ENCODE measurements at regions of chr14 and their contacts with region 1.

Region 1: GRCh38 chr14:51846631-51847488 is 13.6 kb upstream of the GNG2 start:
- DNase-seq: peak; percentile 96
- ATAC-seq: peak; percentile 79
- H3K4me3 ChIP-seq: peak overlapping the region; percentile 57 to 89 (median 72)
- H3K4me3 Mint-ChIP-seq: peak overlapping the region; percentile 86
- H3K27ac ChIP-seq: peak overlapping the region; percentile 98
- H3K27ac Mint-ChIP-seq: peak overlapping the region; percentile 97
- H3K4me1 ChIP-seq: peaks cover 50 to 63% of the 10 kb centered on the region in 2 donors
- H3K4me1 Mint-ChIP-seq: peaks cover 75% of the 10 kb centered on the region
- H3K27me3 ChIP-seq: no peaks in the 10 kb centered on the region
- H3K27me3 Mint-ChIP-seq: no peaks in the 10 kb centered on the region
- CTCF ChIP-seq: no peak

Region 2: DNA sequence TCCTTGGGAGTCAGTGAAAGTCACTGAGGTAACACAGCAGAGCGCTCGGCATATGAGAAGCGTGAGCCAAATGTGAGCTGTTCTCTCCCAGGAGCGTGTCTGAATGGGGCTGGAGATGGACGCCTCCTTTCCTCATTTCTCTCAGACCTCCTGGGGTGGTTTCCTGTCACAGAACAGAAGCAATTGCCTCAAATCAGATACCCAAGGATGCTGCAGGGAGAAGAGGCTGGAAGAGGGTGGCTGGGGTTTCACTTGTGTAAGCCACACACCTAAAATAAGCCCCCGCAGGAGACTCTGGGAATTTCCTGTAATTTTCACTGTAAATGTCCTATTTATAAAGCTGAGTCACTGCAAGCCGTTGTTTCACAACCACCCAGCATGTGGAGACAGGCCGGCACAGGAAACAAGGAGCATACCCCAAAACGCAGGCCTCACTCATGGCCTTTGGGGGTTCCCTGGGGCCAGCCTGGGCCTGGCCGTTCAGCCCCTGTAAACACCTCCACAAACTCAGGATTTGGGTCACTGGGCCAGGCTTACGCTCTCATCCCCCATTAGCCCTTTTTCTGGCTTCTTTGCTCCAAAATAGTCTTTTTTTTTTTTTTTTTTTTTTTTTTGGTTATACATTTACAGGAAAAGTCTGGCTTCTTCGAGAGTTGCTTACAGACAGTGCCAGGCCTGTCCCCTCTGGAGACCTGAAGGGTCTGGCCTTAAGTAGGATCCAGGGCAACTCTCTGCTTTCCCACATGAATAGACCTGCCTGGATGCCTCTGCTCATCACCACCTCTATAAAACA is 1785.8 kb before region 1 on chr14:
- CTCF ChIA-PET with region 1: no interaction called
- POLR2A ChIA-PET with region 1: no interaction called
- intact Hi-C with region 1: loop called (anchors 10 kb)
- DNase-seq: peak; percentile 34
- ATAC-seq: no peak
- H3K4me3 ChIP-seq: peak overlapping the region in 3 of 5 experiments; percentile 0 to 9 (median 2)
- H3K4me3 Mint-ChIP-seq: peak overlapping the region; percentile 95
- H3K27ac ChIP-seq: peak overlapping the region; percentile 92 to 96
- H3K27ac Mint-ChIP-seq: peak overlapping the region; percentile 100
- H3K4me1 ChIP-seq: peaks cover 60 to 82% of the 10 kb centered on the region in 2 donors
- H3K4me1 Mint-ChIP-seq: peaks cover 87% of the 10 kb centered on the region
- H3K27me3 ChIP-seq: no peaks in the 10 kb centered on the region
- H3K27me3 Mint-ChIP-seq: no peaks in the 10 kb centered on the region
- CTCF ChIP-seq: no peak

Region 3: DNA sequence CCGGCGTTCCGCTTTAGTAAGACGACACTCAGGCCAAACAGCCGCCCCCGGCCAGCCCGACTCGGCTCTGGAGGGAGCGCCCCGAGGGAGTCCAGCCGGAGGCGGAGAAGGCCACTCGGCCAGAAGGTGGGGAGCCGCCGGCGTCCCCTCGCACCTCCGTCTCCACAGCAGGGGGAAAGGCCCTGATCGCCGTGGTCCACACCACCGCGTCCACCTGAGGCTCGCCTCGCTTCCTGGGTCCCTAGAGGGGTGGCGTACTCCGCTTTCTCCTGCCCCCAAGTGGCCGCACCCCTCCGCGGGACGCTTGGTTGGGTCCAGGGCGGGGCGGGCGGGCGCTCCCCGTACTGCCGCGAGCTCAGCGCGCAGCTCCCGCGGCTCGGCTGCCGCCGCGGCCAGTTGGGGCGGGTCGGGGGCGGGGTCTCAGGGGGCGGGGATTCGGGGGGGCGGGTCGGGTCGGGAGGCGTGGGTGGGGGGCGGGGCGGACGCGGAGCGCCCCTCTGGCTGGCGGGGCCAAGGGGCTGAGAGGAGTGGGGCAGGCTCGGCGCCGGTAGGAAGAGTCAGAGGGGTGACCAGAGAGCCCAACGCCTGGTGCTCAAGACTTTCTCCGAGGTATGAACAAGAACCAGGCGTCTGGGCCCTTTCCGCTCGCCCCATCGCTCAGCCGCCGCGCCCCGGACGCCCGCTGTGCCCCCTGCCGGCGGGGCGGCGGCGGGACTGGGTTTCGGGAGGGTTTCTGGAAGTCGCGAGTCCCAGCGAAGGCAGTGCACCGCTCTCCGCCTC is 195.3 kb before region 1 on chr14 and contains the start of gene FRMD6:
- CTCF ChIA-PET with region 1: no interaction called
- POLR2A ChIA-PET with region 1: no interaction called
- intact Hi-C with region 1: loop called (anchors 5 kb)
- DNase-seq: peak; percentile 90
- ATAC-seq: peak; percentile 80
- H3K4me3 ChIP-seq: peak within 1 kb of the TSS; percentile 34 to 85 (median 69)
- H3K4me3 Mint-ChIP-seq: peak within 1 kb of the TSS; percentile 85
- H3K27ac ChIP-seq: no peak within 1 kb of the TSS
- H3K27ac Mint-ChIP-seq: peak within 1 kb of the TSS; percentile 56
- H3K4me1 ChIP-seq: peaks cover 19 to 25% of the 10 kb centered on the region in 2 donors
- H3K4me1 Mint-ChIP-seq: peaks cover 12% of the 10 kb centered on the region
- H3K27me3 ChIP-seq: peaks cover 0 to 37% (median 34%) of the 10 kb centered on the region in 4 experiments
- H3K27me3 Mint-ChIP-seq: peaks cover 41% of the 10 kb centered on the region
- CTCF ChIP-seq: peak; percentile 75
- total RNA-seq, gene FRMD6: 0.17 and 0.30 TPM in 2 replicates

Region 4: DNA sequence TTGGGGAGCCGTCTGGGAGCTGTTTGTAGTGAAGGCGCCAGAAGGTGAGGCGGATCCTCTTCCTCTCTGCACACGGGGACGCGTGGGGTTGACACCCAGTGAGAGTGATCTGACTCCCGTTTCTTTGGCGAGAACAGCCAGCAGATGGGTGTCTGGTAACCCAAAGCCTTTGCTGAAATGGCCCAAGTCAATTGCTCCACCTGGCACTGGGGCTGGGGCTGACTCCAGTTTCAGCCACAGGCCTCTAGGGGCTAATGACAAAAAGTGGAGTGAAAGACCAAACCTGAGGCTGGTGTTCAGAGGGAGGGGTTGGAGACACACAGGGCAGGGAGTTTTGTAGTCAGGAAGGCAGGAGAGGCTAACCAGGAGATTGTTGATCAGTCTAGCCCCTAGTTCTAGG is 108.1 kb before region 1 on chr14:
- CTCF ChIA-PET with region 1: no interaction called
- POLR2A ChIA-PET with region 1: no interaction called
- intact Hi-C with region 1: no loop called
- DNase-seq: no peak
- ATAC-seq: no peak
- H3K4me3 ChIP-seq: no peak overlapping the region
- H3K4me3 Mint-ChIP-seq: no peak overlapping the region
- H3K27ac ChIP-seq: no peak overlapping the region
- H3K27ac Mint-ChIP-seq: no peak overlapping the region
- H3K4me1 ChIP-seq: no peaks in the 10 kb centered on the region
- H3K4me1 Mint-ChIP-seq: no peaks in the 10 kb centered on the region
- H3K27me3 ChIP-seq: peaks cover 0 to 6% (median 2%) of the 10 kb centered on the region in 4 experiments
- H3K27me3 Mint-ChIP-seq: peaks cover 8% of the 10 kb centered on the region
- CTCF ChIP-seq: no peak

Region 5: DNA sequence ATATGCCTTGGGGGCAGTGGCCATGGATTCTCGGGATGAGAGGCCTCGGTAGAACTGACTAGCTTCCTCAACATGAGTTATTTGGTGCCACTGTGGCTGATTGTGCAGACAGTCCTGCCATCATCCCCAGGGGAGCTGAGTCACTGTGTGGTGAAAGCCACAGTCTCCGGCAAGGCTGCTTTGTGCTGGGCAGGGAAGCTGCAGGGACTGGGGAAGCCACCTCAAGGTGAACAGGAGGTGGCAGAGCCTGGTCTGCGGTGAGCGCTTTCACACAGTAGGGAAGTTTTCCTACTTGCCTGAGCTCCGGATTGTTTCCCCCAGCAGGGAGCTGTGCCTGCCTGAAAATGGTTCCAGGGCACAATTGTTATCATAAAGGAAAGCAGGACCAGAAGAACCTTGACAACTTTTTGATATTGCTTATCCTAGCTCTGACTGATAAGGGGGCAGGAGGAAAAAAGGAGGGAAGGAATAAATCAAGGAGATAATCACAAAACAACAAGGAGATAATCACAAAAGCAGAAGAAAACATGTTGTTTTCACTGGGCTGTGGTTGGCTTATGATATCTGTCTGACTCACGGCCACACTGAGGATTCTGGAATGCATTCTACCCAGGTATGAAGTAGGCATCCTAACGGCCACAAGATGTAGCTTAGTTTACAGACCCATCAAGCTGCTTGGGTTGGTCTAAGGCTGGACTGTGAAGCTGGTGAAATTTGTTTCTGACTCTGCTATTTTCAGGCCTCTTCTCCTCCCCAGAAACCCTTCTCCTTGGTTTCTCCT is 18.7 kb before region 1 on chr14:
- CTCF ChIA-PET with region 1: interaction called, 24 read pairs
- POLR2A ChIA-PET with region 1: no interaction called
- intact Hi-C with region 1: loop called (anchors 1 kb)
- DNase-seq: peak; percentile 75
- ATAC-seq: peak; percentile 100
- H3K4me3 ChIP-seq: no peak overlapping the region
- H3K4me3 Mint-ChIP-seq: peak overlapping the region; percentile 20
- H3K27ac ChIP-seq: no peak overlapping the region
- H3K27ac Mint-ChIP-seq: peak overlapping the region; percentile 4
- H3K4me1 ChIP-seq: peaks cover 11 to 13% of the 10 kb centered on the region in 2 donors
- H3K4me1 Mint-ChIP-seq: no peaks in the 10 kb centered on the region
- H3K27me3 ChIP-seq: peaks cover 0 to 7% (median 2%) of the 10 kb centered on the region in 4 experiments
- H3K27me3 Mint-ChIP-seq: no peaks in the 10 kb centered on the region
- CTCF ChIP-seq: no peak

Region 6: GRCh38 chr14:51884086-51884927 is 37.4 kb after region 1 on chr14:
- CTCF ChIA-PET with region 1: interaction called, 3 read pairs
- POLR2A ChIA-PET with region 1: no interaction called
- intact Hi-C with region 1: loop called (anchors 5 kb)
- DNase-seq: peak; percentile 40
- ATAC-seq: peak; percentile 14
- H3K4me3 ChIP-seq: no peak overlapping the region
- H3K4me3 Mint-ChIP-seq: peak overlapping the region; percentile 17
- H3K27ac ChIP-seq: peak overlapping the region; percentile 8 to 19
- H3K27ac Mint-ChIP-seq: peak overlapping the region; percentile 67
- H3K4me1 ChIP-seq: peaks cover 31 to 39% of the 10 kb centered on the region in 2 donors
- H3K4me1 Mint-ChIP-seq: peaks cover 55% of the 10 kb centered on the region
- H3K27me3 ChIP-seq: no peaks in the 10 kb centered on the region
- H3K27me3 Mint-ChIP-seq: no peaks in the 10 kb centered on the region
- CTCF ChIP-seq: no peak

Region 7: DNA sequence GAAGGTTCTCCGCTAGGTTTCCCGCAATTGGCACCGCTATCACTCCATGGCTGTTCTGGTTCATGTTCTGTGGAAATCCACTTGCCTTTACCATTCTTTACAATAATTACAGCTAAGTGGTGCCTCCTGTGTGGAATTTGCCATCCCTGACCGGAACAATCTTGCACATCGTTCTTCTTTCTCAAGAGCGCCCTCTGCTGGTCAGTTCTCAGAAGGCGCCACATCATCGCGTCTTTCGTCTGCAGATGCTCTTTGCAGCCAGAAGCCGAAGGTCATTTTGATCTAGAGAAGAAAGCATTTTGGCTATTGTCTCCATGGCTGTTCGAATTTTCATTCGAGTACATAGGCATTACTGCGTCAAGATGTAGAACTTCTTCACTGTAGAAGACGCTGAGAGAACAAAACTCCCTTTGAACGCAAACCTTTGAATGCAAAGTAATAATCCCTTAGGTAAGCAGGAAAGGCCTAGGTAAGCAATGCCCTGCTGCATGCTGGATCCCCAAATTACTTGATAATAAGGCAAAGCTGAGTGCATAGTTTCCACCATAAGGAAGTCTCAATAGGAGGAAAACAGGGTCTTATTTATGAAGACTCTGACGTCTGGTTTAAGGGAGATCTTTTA is 132.3 kb after region 1 on chr14:
- CTCF ChIA-PET with region 1: interaction called, 19 read pairs
- POLR2A ChIA-PET with region 1: no interaction called
- intact Hi-C with region 1: loop called (anchors 2 kb)
- DNase-seq: peak; percentile 83
- ATAC-seq: peak; percentile 66
- H3K4me3 ChIP-seq: no peak overlapping the region
- H3K4me3 Mint-ChIP-seq: no peak overlapping the region
- H3K27ac ChIP-seq: no peak overlapping the region
- H3K27ac Mint-ChIP-seq: no peak overlapping the region
- H3K4me1 ChIP-seq: peaks cover 5 to 6% of the 10 kb centered on the region in 2 donors
- H3K4me1 Mint-ChIP-seq: peaks cover 5% of the 10 kb centered on the region
- H3K27me3 ChIP-seq: no peaks in the 10 kb centered on the region
- H3K27me3 Mint-ChIP-seq: no peaks in the 10 kb centered on the region
- CTCF ChIP-seq: peak; percentile 96

Region 8: GRCh38 chr14:52313903-52314594 is 467.2 kb after region 1 on chr14 and contains the start of gene PTGER2:
- CTCF ChIA-PET with region 1: no interaction called
- POLR2A ChIA-PET with region 1: no interaction called
- intact Hi-C with region 1: no loop called
- DNase-seq: peak; percentile 58
- ATAC-seq: peak; percentile 56
- H3K4me3 ChIP-seq: peak within 1 kb of the TSS; percentile 37 to 54 (median 50)
- H3K4me3 Mint-ChIP-seq: peak within 1 kb of the TSS; percentile 95
- H3K27ac ChIP-seq: no peak within 1 kb of the TSS
- H3K27ac Mint-ChIP-seq: peak within 1 kb of the TSS; percentile 3
- H3K4me1 ChIP-seq: peaks cover 49 to 57% of the 10 kb centered on the region in 2 donors
- H3K4me1 Mint-ChIP-seq: peaks cover 49% of the 10 kb centered on the region
- H3K27me3 ChIP-seq: peaks cover 0 to 77% (median 52%) of the 10 kb centered on the region in 4 experiments
- H3K27me3 Mint-ChIP-seq: peaks cover 57% of the 10 kb centered on the region
- CTCF ChIP-seq: no peak
- total RNA-seq, gene PTGER2: 0.32 and 0.44 TPM in 2 replicates

Region 9: DNA sequence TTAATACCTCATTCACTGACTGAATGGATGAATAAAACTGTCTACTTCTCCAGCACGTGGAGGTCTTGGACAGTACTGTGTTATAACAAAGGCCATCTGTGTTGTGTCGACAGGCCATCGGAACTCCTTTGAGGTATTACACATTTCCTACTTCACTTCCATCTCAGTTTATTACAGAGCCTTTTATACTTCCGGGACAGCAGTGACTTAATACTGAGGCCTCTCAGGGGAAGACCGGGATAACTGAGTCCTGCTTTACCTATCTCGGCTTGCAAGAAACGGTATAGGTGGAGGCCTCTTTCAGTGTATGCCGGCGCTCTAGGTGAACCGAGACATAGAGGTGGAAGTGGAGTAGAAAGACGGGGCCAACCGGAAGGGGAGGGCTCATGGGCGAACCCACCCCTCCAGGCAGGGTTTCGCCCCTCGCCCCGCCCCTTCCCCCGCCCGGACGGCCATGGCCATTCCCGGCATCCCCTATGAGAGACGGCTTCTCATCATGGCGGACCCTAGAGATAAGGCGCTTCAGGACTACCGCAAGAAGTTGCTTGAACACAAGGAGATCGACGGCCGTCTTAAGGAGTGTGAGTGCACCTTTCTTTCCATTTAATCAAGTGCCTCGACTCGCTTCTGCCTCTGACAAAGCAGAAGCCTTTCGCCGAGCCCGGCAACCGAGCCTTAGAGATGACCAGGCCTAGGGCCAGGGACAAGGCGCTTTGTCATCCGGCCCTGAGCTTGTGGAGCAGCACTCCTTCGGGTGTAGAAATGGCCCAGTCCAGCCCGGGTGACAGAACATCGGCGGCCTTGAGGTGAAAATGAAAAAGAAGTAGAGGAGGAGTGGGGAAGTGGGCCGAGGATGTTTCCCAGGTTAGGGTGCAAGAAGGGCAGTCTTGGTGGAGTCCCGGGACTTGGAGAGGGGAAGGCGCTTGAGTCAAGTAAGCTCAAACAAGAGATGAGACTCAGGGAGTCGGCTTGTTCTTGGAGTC is 860.2 kb after region 1 on chr14 and contains the start of gene PSMC6:
- CTCF ChIA-PET with region 1: no interaction called
- POLR2A ChIA-PET with region 1: no interaction called
- intact Hi-C with region 1: loop called (anchors 10 kb)
- DNase-seq: peak; percentile 94
- ATAC-seq: peak; percentile 99
- H3K4me3 ChIP-seq: peak within 1 kb of the TSS; percentile 83 to 94 (median 88)
- H3K4me3 Mint-ChIP-seq: peak within 1 kb of the TSS; percentile 98
- H3K27ac ChIP-seq: peak within 1 kb of the TSS; percentile 67 to 90
- H3K27ac Mint-ChIP-seq: peak within 1 kb of the TSS; percentile 98
- H3K4me1 ChIP-seq: peaks cover 16% of the 10 kb centered on the region in 2 donors
- H3K4me1 Mint-ChIP-seq: peaks cover 24% of the 10 kb centered on the region
- H3K27me3 ChIP-seq: no peaks in the 10 kb centered on the region
- H3K27me3 Mint-ChIP-seq: no peaks in the 10 kb centered on the region
- CTCF ChIP-seq: no peak
- total RNA-seq, gene PSMC6: 75.3 and 92.2 TPM in 2 replicates